ENCODE measurements at regions of chr4 and their contacts with region 1.

Region 1: GRCh38 chr4:13535708-13536361 is 8.5 kb downstream of the NKX3-2 start:
- DNase-seq: no peak
- H3K4me3 Mint-ChIP-seq: no peak overlapping the region
- H3K27ac Mint-ChIP-seq: peak overlapping the region; percentile 15
- H3K4me1 Mint-ChIP-seq: peaks cover 11% of the 10 kb centered on the region
- H3K27me3 Mint-ChIP-seq: peaks cover 88% of the 10 kb centered on the region

Region 2: GRCh38 chr4:12852338-12853307 is 683.2 kb before region 1 on chr4:
- intact Hi-C with region 1: loop called (anchors 5 kb)
- DNase-seq: no peak
- H3K4me3 Mint-ChIP-seq: no peak overlapping the region
- H3K27ac Mint-ChIP-seq: no peak overlapping the region
- H3K4me1 Mint-ChIP-seq: no peaks in the 10 kb centered on the region
- H3K27me3 Mint-ChIP-seq: no peaks in the 10 kb centered on the region

Measured in activated CD4-positive, alpha-beta T cell treated with anti-CD3 and anti-CD28 coated beads, Interleukin-2, amount 10 ng/mL, durations not matched to agents 24 days and 14 days (primary cell).